Activated T-helper 2 cell treated with anti-CD3 and anti-CD28 coated beads, Interferon-gamma antibody, Interleukin-2, Interleukin-4, amounts not matched to agents 10 μg/mL and 5 μg/mL and 100 μg/mL, durations not matched to agents 14 hours and 24 hours and 36 hours (primary cell): ENCODE measurements at regions of chr15 and their contacts with region 1.

Region 1: DNA sequence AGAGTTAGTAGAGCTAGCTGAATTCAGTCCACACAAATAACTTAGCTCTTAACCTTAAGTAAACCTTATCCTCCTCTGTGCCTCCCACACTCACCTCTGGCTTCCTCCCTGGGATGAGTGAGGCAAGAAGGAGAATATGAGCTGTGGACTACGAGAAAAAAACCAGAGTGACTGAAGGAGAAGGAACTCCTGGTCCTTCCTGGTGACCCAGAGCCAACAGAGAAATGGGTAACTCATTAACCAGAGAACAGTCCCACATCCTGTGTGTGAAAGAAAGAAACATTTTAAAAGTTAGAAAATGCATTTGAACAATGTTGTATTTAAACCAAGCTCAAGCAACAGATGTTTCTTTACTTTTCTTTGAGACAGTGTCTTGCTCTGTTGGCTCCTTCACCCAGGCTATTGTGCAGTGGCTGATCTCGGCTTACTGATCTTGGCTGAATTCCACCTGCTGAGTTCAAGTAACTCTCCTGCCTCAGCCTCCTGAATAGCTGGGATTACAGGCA is 27.5 kb upstream of the FAM81A start:
- DNase-seq: no peak
- H3K4me3 Mint-ChIP-seq: no peak overlapping the region
- H3K27ac Mint-ChIP-seq: no peak overlapping the region
- H3K4me1 Mint-ChIP-seq: peaks cover 32% of the 10 kb centered on the region
- H3K27me3 Mint-ChIP-seq: peaks cover 20% of the 10 kb centered on the region

Region 2: GRCh38 chr15:59247364-59247763 is 163.1 kb before region 1 on chr15:
- intact Hi-C with region 1: loop called (anchors 5 kb)
- DNase-seq: peak; percentile 45
- H3K4me3 Mint-ChIP-seq: no peak overlapping the region
- H3K27ac Mint-ChIP-seq: no peak overlapping the region
- H3K4me1 Mint-ChIP-seq: peaks cover 39% of the 10 kb centered on the region
- H3K27me3 Mint-ChIP-seq: peaks cover 2% of the 10 kb centered on the region

Region 3: GRCh38 chr15:59436774-59437141 is 26.3 kb after region 1 on chr15:
- intact Hi-C with region 1: no loop called
- DNase-seq: no peak
- H3K4me3 Mint-ChIP-seq: peak overlapping the region; percentile 66
- H3K27ac Mint-ChIP-seq: no peak overlapping the region
- H3K4me1 Mint-ChIP-seq: peaks cover 15% of the 10 kb centered on the region
- H3K27me3 Mint-ChIP-seq: peaks cover 76% of the 10 kb centered on the region